HEK293 (cell line): ENCODE measurements at regions of chr15 and their contacts with region 1.

Region 1: GRCh38 chr15:99104788-99105513 is at the start of gene SYNM:
- H3K4me3 ChIP-seq: peak within 1 kb of the TSS; percentile 51
- H3K27ac ChIP-seq: peak within 1 kb of the TSS; percentile 84
- H3K4me1 ChIP-seq: no peaks in the 10 kb centered on the region; the same call in none of the 2 replicates
- CTCF ChIP-seq: peak; percentile 70

Region 2: DNA sequence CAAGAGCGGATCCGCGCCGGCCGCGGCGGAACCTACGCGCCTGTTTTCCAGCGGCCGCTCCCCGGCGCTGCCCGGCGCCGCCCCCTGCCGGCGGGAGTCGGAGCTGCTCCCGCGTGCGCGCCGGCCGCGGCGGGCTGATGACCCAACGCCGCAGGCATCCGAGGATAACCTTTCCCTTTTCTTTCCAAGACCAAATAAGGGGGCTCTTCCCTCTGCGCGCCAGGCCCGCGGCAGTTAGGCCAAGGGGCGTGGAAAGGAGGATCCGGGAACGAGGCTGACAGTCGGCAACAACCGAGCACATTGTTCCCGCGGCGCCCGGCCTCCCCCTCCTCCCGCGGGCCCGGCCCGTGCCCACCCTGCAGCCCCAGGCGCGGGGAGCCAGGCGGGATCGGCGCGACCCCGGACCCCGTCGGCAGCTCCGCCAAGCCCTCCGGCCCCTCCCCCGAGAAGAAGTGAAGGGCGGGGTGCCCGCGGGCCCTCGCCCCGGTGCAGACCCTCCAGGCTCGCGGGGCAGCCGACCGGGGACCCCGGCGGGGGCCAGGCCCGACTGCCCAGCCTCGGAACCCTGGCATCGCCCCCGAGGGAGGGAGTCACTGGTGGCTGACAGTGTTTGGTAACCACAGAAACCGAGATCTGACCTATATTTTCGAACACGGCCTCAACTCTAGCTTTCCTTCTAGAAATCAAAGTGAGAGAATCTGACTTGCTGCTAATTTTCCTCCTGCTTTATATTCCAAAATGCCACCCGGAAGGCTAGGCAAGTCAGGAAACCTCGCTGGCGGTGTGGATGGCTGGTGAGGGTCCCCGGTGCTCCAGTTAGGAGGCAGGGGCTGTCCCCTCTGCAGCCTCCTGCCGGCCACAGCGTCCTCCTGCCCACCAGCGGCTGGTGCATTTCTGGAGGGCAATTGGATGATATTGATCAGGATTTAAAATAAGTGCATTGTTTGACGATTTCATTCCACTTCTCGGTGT is 45.7 kb before region 1 on chr15:
- CTCF ChIA-PET with region 1: no interaction called
- POLR2A ChIA-PET with region 1: no interaction called
- H3K4me3 ChIP-seq: peak overlapping the region; percentile 50
- H3K27ac ChIP-seq: peak overlapping the region; percentile 59; the same call in 1 of the 2 replicates
- H3K4me1 ChIP-seq: no peaks in the 10 kb centered on the region; the same call in 1 of the 2 replicates
- CTCF ChIP-seq: no peak

Region 3: GRCh38 chr15:99076552-99077308 is 28.2 kb before region 1 on chr15:
- CTCF ChIA-PET with region 1: interaction called, 20 read pairs
- POLR2A ChIA-PET with region 1: interaction called, 3 read pairs
- H3K4me3 ChIP-seq: peak overlapping the region; percentile 1; the same call in 1 of the 2 replicates
- H3K27ac ChIP-seq: no peak overlapping the region
- H3K4me1 ChIP-seq: no peaks in the 10 kb centered on the region
- CTCF ChIP-seq: peak; percentile 70; the same call in 1 of the 2 replicates

Region 4: GRCh38 chr15:99085413-99086326 is 19.3 kb before region 1 on chr15:
- CTCF ChIA-PET with region 1: interaction called, 14 read pairs
- POLR2A ChIA-PET with region 1: interaction called, 3 read pairs
- H3K4me3 ChIP-seq: no peak overlapping the region
- H3K27ac ChIP-seq: no peak overlapping the region
- H3K4me1 ChIP-seq: no peaks in the 10 kb centered on the region
- CTCF ChIP-seq: no peak

Region 5: DNA sequence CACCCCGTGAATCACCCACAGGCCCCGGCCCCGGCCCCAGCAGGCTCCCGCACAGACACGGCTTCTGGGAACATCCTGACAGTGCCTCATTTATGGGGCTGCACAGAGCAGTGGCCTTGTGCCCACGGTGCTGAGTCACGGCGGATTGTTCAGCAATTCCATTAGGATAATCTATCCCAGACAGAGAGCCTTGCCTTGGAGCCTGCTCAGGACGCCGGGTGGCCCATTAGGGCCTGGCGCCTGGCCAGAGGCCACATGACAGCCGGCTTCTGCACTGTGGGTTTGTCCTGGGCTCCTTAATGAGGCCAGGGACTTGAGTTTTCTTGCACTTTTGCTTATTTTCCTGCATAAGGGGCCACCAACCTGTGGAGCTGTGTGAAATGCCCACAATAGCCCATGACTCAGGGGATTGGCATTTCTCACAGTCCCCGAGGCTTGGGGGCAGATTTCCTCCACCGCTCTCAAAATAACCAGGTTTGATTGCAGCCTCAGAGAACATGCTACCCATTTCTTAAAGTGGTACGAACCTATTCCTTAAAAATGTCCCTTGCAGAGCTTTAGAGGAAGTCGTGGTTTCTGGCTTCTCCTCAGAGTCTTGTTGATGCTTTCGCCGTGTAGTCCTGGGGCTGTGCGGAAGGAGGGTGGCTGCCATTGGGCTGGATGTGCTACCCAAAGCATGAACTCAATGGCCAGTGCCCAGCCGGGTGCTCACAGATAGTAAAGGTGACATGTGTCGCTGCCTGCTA is 18.9 kb after region 1 on chr15:
- CTCF ChIA-PET with region 1: interaction called, 16 read pairs
- POLR2A ChIA-PET with region 1: interaction called, 9 read pairs
- H3K4me3 ChIP-seq: peak overlapping the region; percentile 20
- H3K27ac ChIP-seq: peak overlapping the region; percentile 82
- H3K4me1 ChIP-seq: peaks cover 7% of the 10 kb centered on the region
- CTCF ChIP-seq: no peak

Region 6: DNA sequence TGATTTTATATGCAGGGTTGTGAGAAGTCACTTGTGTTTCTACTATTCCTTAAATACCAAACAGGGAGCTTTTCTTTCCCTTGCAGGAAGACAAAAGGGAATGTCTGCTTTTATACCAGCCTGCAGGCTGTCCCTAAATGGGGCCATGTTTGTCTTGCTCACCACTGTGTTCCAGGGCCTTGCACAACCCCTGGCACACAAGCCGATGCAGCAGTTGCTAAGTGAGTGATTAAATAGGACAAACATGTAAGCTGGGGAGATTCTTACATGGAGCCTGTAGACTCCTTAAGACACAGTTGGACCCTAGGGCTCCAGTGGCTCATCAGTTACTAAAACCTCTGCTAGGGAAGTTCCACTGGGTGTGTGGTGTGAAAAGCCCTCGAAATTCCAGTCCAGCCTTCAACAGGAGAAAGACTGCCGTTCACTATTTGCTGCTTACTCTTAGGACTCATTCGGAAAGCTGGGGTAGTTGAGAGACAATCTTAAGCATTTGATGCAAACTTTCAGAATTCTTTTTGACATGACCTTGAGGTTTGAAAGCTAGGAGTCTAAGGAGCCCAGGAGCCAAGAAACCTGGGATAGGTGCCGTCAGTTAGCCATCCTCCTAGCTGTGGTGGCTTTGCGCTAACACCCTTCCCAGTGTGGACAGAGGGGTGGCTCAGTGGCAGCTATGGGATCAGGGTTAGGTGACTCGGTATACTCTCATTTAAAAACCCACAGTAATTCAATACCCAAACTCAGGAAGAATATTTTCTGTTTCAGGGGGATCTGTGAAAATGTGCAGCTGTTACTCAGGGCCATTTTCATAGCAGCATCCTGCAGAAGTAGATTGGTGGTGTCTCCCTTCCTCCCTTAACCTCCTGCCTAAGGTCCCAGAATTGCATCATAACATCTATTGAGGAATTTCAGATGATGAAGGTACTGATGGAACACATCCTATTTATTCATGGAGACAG is 39.0 kb after region 1 on chr15:
- CTCF ChIA-PET with region 1: interaction called, 15 read pairs
- POLR2A ChIA-PET with region 1: no interaction called
- H3K4me3 ChIP-seq: no peak overlapping the region
- H3K27ac ChIP-seq: no peak overlapping the region
- H3K4me1 ChIP-seq: no peaks in the 10 kb centered on the region
- CTCF ChIP-seq: no peak

Region 7: DNA sequence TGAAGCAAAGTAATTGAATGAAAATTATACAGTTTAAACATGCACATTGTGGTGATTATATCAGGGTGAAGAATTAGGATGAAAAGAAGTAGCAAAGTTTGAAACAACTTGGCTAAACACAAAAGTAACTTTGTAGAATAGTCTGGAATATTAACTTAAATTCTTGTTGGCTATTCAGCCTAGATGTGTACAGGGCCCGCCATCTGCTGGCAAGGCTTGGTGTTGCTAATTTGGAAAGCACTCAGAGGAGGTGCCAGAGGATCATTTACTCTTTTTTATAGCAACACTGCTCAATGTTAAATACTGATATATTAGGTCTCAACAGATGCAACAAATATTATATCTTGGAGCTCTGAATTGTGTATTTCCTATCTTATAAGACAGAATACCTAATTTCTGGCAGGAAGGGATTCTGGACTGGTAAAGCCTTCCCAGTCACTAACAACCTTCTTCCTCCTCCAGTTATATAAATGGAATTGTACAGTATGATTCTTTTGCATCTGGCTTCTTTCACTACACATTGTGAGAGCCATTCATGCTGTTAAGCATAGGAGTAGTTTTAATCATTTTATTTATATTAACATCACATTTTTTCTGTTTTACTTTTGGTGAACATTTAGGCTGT is 108.3 kb after region 1 on chr15:
- CTCF ChIA-PET with region 1: interaction called, 118 read pairs
- POLR2A ChIA-PET with region 1: interaction called, 4 read pairs
- H3K4me3 ChIP-seq: no peak overlapping the region
- H3K27ac ChIP-seq: no peak overlapping the region
- H3K4me1 ChIP-seq: no peaks in the 10 kb centered on the region
- CTCF ChIP-seq: peak; percentile 25; the same call in 1 of the 2 replicates

Region 8: GRCh38 chr15:99250494-99251435 is 145.8 kb after region 1 on chr15:
- CTCF ChIA-PET with region 1: interaction called, 12 read pairs
- POLR2A ChIA-PET with region 1: interaction called, 4 read pairs
- H3K4me3 ChIP-seq: peak overlapping the region; percentile 88
- H3K27ac ChIP-seq: peak overlapping the region; percentile 93
- H3K4me1 ChIP-seq: peaks cover 18% of the 10 kb centered on the region; the same call in 1 of the 2 replicates
- CTCF ChIP-seq: no peak